HCT116 (cell line): ENCODE measurements at regions of chr3 and their contacts with region 1.

Region 1: DNA sequence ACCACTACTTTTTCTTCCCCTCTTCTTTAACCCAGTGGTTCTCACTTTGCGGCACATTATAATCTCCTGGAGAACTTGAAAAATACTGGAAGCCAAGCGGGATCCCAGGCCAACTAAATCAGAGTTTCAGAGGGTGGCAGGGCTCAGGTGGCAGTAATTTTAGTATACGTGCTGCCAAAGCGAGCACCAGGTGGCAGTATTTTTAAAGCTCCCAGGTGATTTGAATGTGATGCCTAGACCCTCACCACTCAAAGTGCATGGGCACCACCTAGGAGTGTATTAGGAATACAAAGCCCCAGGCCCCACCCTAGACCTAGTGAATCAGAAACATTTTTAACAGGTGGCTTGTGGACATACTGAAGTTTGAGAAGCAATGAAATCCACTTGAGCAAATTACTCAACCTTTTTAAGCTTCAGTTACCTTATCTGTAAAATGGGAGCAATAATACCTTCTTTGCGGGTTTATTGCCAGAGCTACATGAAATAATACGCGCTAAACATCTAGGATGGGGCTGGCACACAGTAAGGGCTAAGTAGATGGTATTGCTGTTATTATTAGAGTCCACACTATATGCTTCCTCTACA is 8.3 kb downstream of the B3GALNT1 start:
- DNase-seq: no peak
- ATAC-seq: peak; percentile 78
- H3K4me3 ChIP-seq: no peak overlapping the region
- H3K27ac ChIP-seq: no peak overlapping the region
- H3K4me1 ChIP-seq: peaks cover 0 to 5% of the 10 kb centered on the region in 2 experiments; a peak in 1 of 4 replicates
- H3K27me3 ChIP-seq: no peaks in the 10 kb centered on the region
- CTCF ChIP-seq: peak; percentile 51 to 69 (median 66); a peak in 5 of 6 replicates
- POLR2A ChIP-seq: no peak
- RAD21 ChIP-seq: peak; percentile 64

Region 2: GRCh38 chr3:161014843-161015749 is 81.8 kb before region 1 on chr3:
- CTCF ChIA-PET with region 1: no interaction called
- POLR2A ChIA-PET with region 1: no interaction called
- RAD21 ChIA-PET with region 1: interaction called in 1 of 2 experiments, 13 read pairs
- intact Hi-C with region 1: no loop called
- DNase-seq: no peak
- ATAC-seq: no peak
- H3K4me3 ChIP-seq: no peak overlapping the region
- H3K27ac ChIP-seq: no peak overlapping the region
- H3K4me1 ChIP-seq: no peaks in the 10 kb centered on the region
- H3K27me3 ChIP-seq: no peaks in the 10 kb centered on the region
- CTCF ChIP-seq: no peak
- POLR2A ChIP-seq: no peak
- RAD21 ChIP-seq: no peak

Region 3: DNA sequence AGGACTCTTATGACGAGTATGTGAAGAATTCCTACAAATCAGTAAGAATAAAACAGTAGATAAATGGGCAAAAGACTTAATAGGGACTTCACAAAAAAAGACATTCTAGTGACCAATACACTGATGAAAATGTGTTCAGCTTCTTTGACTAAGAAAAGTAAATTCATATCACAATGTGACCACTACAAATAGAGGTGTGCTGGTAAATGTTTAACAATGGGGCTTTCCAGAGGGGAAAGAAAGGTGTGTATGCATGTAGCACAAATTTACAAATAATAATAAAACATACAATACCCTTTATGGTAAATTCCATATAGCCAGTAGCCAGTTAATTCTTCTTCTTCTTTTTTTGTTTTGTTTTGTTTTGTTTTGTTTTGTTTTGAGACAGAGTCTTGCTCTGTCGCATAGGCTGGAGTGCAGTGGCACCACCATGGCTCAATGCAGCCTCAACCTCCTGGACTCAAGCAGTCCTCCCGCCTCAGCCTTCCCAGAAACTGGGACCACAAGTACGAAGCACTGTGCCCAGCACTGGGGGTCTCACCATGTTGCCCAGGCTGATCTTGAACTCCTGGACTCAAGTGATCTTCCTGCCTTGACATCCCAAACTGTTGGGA is 106.7 kb after region 1 on chr3:
- CTCF ChIA-PET with region 1: no interaction called
- POLR2A ChIA-PET with region 1: no interaction called
- RAD21 ChIA-PET with region 1: no interaction called
- intact Hi-C with region 1: loop called (anchors 5 kb)
- DNase-seq: no peak
- ATAC-seq: no peak
- H3K4me3 ChIP-seq: no peak overlapping the region
- H3K27ac ChIP-seq: no peak overlapping the region
- H3K4me1 ChIP-seq: peaks cover 0 to 10% of the 10 kb centered on the region in 2 experiments; a peak in 2 of 4 replicates
- H3K27me3 ChIP-seq: no peaks in the 10 kb centered on the region
- CTCF ChIP-seq: no peak
- POLR2A ChIP-seq: no peak
- RAD21 ChIP-seq: no peak

Region 4: GRCh38 chr3:161409069-161409468 is 312.2 kb after region 1 on chr3:
- CTCF ChIA-PET with region 1: no interaction called
- POLR2A ChIA-PET with region 1: no interaction called
- RAD21 ChIA-PET with region 1: no interaction called
- intact Hi-C with region 1: loop called (anchors 2 kb)
- DNase-seq: peak; percentile 49
- ATAC-seq: peak; percentile 87
- H3K4me3 ChIP-seq: no peak overlapping the region
- H3K27ac ChIP-seq: no peak overlapping the region
- H3K4me1 ChIP-seq: no peaks in the 10 kb centered on the region
- H3K27me3 ChIP-seq: no peaks in the 10 kb centered on the region
- CTCF ChIP-seq: peak; percentile 57 to 88 (median 80)
- POLR2A ChIP-seq: no peak
- RAD21 ChIP-seq: peak; percentile 89